ENCODE measurements at regions of chr17 and their contacts with region 1.

Region 1: DNA sequence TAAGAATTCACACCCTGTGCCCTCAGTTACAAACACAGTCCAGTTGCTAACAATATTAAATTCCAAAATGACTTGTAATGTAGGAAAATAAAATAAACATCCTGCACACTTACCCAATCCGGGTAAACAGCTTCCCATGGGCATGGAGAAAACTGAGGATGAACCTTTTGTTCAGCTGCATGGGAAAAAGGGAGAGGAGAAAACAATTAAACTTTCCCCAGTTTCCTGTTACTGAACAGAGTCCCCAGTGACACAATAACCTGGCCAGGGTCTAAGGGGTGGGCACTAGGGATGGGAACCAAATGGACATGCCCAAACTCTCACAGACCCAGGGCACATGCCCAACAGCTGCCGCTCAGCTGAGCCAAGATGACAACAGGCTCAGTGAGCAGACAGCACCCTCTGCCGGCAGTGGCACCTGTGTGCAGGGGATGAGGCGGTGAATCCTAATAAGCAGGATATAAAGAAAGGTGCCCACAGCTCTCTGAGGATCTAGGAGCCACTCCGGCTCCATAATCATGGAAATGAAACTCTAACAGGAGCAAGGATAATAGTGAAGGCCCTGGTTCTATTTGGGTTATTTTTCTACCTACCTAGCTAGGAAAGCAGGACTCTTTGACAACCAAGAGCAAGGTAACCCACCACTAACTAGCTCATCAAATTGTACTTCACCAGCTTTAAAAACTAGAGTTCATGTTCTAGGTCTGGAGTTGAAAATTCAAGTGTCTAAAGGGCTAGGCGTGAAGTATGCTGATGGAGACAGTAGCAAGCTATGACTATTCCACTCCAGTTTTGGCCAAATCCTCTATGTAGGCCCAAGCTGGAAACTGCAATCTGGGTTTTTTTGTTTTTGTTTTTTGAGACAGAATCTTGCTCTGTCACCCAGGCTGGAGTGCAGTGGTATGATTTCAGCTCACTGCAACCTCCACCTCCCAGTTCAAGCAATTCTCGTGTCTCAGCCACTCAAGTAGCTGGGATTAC is 58.8 kb downstream of the SMG6 start:
- DNase-seq: peak; percentile 59 to 90 (median 80)
- ATAC-seq: peak; percentile 86 to 98 (median 92)
- H3K4me3 ChIP-seq: no peak overlapping the region
- H3K4me3 Mint-ChIP-seq: no peak overlapping the region
- H3K27ac ChIP-seq: no peak overlapping the region
- H3K27ac Mint-ChIP-seq: peak overlapping the region; percentile 56 to 78
- H3K4me1 ChIP-seq: peaks cover 2 to 5% of the 10 kb centered on the region in 2 experiments
- H3K4me1 Mint-ChIP-seq: peaks cover 33 to 39% (median 34%) of the 10 kb centered on the region in 3 donors
- H3K27me3 ChIP-seq: no peaks in the 10 kb centered on the region
- H3K27me3 Mint-ChIP-seq: no peaks in the 10 kb centered on the region

Region 2: DNA sequence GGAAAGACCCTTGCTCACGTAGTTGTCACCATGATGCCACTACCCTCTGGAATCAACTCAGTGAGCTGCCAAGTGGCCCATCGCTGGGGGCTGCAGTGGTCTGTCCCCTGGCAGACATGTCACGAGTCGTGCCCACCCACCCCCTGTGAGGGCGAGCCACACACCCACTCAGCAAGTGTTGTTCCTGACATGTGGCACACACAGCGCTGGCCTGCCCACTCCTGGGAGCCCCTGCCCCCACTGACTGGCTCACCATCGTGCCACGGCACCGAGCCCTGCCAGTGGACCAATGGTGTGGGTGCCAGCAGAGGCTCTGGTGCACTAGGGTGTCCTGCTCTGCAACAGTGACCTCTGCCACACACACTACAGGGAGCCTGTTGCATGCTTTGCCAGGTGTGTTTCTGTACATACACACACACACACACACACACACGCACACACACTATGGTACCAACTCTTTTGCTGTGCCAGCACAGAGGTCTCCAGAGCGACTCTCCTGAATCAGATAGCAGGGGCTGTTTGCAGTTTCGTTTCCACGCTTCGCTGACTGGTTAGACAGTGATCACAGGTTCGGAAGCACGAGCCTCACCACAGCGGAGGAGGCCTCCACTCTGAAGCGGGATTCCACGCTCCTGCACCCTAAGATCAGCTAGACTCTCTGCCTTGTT is 227.4 kb before region 1 on chr17:
- CTCF ChIA-PET with region 1: no interaction called
- POLR2A ChIA-PET with region 1: no interaction called
- DNase-seq: no peak
- ATAC-seq: no peak
- H3K4me3 ChIP-seq: no peak overlapping the region
- H3K4me3 Mint-ChIP-seq: no peak overlapping the region
- H3K27ac ChIP-seq: no peak overlapping the region
- H3K27ac Mint-ChIP-seq: no peak overlapping the region
- H3K4me1 ChIP-seq: peaks cover 0 to 3% of the 10 kb centered on the region in 2 experiments
- H3K4me1 Mint-ChIP-seq: peaks cover under 1 to 5% (median 2%) of the 10 kb centered on the region in 3 donors
- H3K27me3 ChIP-seq: peaks cover 0 to 78% of the 10 kb centered on the region in 2 experiments
- H3K27me3 Mint-ChIP-seq: peaks cover 17 to 26% of the 10 kb centered on the region in 2 donors

Region 3: GRCh38 chr17:2054512-2055291 is 190.1 kb before region 1 on chr17 and contains the start of gene HIC1:
- CTCF ChIA-PET with region 1: interaction called, 5 to 58 read pairs
- POLR2A ChIA-PET with region 1: no interaction called
- DNase-seq: peak; percentile 51 to 88 (median 73)
- ATAC-seq: peak; percentile 56 to 60 (median 58)
- H3K4me3 ChIP-seq: peak within 1 kb of the TSS; percentile 47 to 58
- H3K4me3 Mint-ChIP-seq: peak within 1 kb of the TSS; percentile 76 to 79 (median 76)
- H3K27ac ChIP-seq: peak within 1 kb of the TSS; percentile 76
- H3K27ac Mint-ChIP-seq: peak within 1 kb of the TSS; percentile 65 to 69
- H3K4me1 ChIP-seq: peaks cover 14 to 66% of the 10 kb centered on the region in 2 experiments
- H3K4me1 Mint-ChIP-seq: peaks cover 20 to 27% (median 24%) of the 10 kb centered on the region in 3 donors
- H3K27me3 ChIP-seq: peaks cover 2 to 39% of the 10 kb centered on the region in 2 experiments
- H3K27me3 Mint-ChIP-seq: peaks cover 4 to 5% of the 10 kb centered on the region in 2 donors
- total RNA-seq, gene HIC1: 3.2 to 12.3 (median 8.4) TPM

Region 4: GRCh38 chr17:2151358-2152033 is 93.3 kb before region 1 on chr17:
- CTCF ChIA-PET with region 1: no interaction called
- POLR2A ChIA-PET with region 1: no interaction called
- DNase-seq: no peak
- ATAC-seq: no peak
- H3K4me3 ChIP-seq: no peak overlapping the region
- H3K4me3 Mint-ChIP-seq: no peak overlapping the region
- H3K27ac ChIP-seq: no peak overlapping the region
- H3K27ac Mint-ChIP-seq: no peak overlapping the region
- H3K4me1 ChIP-seq: peaks cover 2 to 8% of the 10 kb centered on the region in 2 experiments
- H3K4me1 Mint-ChIP-seq: peaks cover 2 to 7% (median 5%) of the 10 kb centered on the region in 3 donors
- H3K27me3 ChIP-seq: no peaks in the 10 kb centered on the region
- H3K27me3 Mint-ChIP-seq: no peaks in the 10 kb centered on the region

Region 5: DNA sequence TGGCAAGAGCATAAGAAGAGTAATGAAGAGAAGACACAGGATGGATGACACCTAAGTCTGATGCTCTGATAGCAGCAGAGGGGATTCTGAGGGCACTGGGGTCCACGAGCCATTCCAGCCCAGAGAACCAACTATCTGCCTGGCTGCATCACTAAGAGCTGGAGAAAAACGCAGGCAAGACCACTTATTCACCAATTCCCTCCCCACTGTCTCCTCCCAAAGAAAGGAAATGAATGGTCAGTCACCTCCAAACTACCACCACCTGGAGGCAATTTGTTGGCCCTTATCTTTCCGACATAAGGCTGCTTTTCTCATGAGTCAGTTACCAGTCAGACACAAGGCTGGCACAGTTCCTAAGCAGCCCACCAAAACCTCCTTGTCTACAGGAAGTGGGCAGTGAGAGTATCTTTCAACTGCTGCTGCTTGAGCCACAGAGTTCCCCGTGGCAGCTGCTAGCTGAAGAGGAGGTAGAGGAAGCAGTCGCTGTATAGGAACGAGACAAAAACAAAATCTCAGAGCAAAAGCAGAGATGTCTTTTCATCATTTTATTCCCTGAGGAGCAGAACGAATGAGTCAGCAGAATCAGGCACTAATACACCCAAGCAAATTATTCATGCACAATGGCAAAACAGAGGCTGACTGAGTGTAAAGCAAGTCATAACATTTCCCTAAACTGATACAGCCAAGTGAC is 52.3 kb before region 1 on chr17:
- CTCF ChIA-PET with region 1: no interaction called
- POLR2A ChIA-PET with region 1: no interaction called
- DNase-seq: peak; percentile 22 to 75 (median 54)
- ATAC-seq: peak; percentile 93 to 98 (median 96)
- H3K4me3 ChIP-seq: no peak overlapping the region
- H3K4me3 Mint-ChIP-seq: peak overlapping the region; percentile 15 to 60 (median 54)
- H3K27ac ChIP-seq: peak overlapping the region; percentile 51
- H3K27ac Mint-ChIP-seq: peak overlapping the region; percentile 66 to 77
- H3K4me1 ChIP-seq: peaks cover 17 to 38% of the 10 kb centered on the region in 2 experiments
- H3K4me1 Mint-ChIP-seq: peaks cover 61 to 67% (median 62%) of the 10 kb centered on the region in 3 donors
- H3K27me3 ChIP-seq: no peaks in the 10 kb centered on the region
- H3K27me3 Mint-ChIP-seq: no peaks in the 10 kb centered on the region

Region 6: GRCh38 chr17:2435181-2435741 is 190.4 kb after region 1 on chr17:
- CTCF ChIA-PET with region 1: no interaction called
- POLR2A ChIA-PET with region 1: no interaction called
- DNase-seq: no peak
- ATAC-seq: no peak
- H3K4me3 ChIP-seq: no peak overlapping the region
- H3K4me3 Mint-ChIP-seq: no peak overlapping the region
- H3K27ac ChIP-seq: no peak overlapping the region
- H3K27ac Mint-ChIP-seq: peak overlapping the region in 1 of 2 donors; percentile 34
- H3K4me1 ChIP-seq: no peaks in the 10 kb centered on the region
- H3K4me1 Mint-ChIP-seq: no peaks in the 10 kb centered on the region
- H3K27me3 ChIP-seq: no peaks in the 10 kb centered on the region
- H3K27me3 Mint-ChIP-seq: no peaks in the 10 kb centered on the region

Measured in T-cell (primary cell).